ENCODE measurements at regions of chr21 and their contacts with region 1.

Region 1: GRCh38 chr21:35470522-35470921 is 421.4 kb upstream of the RUNX1 start:
- DNase-seq: no peak
- H3K4me3 ChIP-seq: no peak overlapping the region
- H3K27ac ChIP-seq: no peak overlapping the region
- H3K4me1 ChIP-seq: no peaks in the 10 kb centered on the region
- H3K27me3 ChIP-seq: no peaks in the 10 kb centered on the region
- CTCF ChIP-seq: no peak

Region 2: GRCh38 chr21:35206141-35207125 is 264.1 kb before region 1 on chr21:
- CTCF ChIA-PET with region 1: no interaction called
- dilution Hi-C with region 1: no loop called
- in situ Hi-C with region 1: no loop called
- intact Hi-C with region 1: no loop called
- DNase-seq: peak; percentile 65
- H3K4me3 ChIP-seq: peak overlapping the region in 2 of 3 experiments; percentile 1 to 4
- H3K27ac ChIP-seq: peak overlapping the region; percentile 57
- H3K4me1 ChIP-seq: peaks cover 18% of the 10 kb centered on the region
- H3K27me3 ChIP-seq: no peaks in the 10 kb centered on the region
- CTCF ChIP-seq: peak in 1 of 2 donors; percentile 4

Region 3: DNA sequence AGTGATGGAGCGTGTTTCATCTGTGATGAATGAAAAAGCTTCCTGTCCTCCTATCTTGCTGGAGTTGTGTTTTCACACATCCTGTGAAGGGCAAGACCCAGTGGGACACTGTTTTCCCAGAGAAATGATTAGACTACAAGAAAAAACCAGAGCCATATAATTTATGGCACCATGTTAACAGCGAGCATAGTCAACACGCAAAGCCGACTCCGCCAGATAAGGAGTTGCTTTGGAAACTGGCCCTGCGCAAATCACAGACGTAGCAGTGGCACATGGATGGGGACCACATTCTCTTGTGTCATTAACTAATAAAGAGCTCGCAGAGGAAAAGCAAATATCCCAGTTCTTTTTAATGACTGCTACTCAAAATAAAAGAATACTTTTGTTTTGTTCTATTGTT is 49.8 kb after region 1 on chr21:
- CTCF ChIA-PET with region 1: no interaction called
- dilution Hi-C with region 1: loop called (anchors 5 kb)
- in situ Hi-C with region 1: no loop called
- intact Hi-C with region 1: no loop called
- DNase-seq: no peak
- H3K4me3 ChIP-seq: no peak overlapping the region
- H3K27ac ChIP-seq: no peak overlapping the region
- H3K4me1 ChIP-seq: peaks cover 12% of the 10 kb centered on the region
- H3K27me3 ChIP-seq: no peaks in the 10 kb centered on the region
- CTCF ChIP-seq: no peak

Region 4: GRCh38 chr21:35565204-35565611 is 94.7 kb after region 1 on chr21:
- CTCF ChIA-PET with region 1: no interaction called
- dilution Hi-C with region 1: loop called (anchors 5 kb)
- in situ Hi-C with region 1: no loop called
- intact Hi-C with region 1: no loop called
- DNase-seq: peak; percentile 39
- H3K4me3 ChIP-seq: no peak overlapping the region
- H3K27ac ChIP-seq: no peak overlapping the region
- H3K4me1 ChIP-seq: no peaks in the 10 kb centered on the region
- H3K27me3 ChIP-seq: no peaks in the 10 kb centered on the region
- CTCF ChIP-seq: no peak

Region 5: DNA sequence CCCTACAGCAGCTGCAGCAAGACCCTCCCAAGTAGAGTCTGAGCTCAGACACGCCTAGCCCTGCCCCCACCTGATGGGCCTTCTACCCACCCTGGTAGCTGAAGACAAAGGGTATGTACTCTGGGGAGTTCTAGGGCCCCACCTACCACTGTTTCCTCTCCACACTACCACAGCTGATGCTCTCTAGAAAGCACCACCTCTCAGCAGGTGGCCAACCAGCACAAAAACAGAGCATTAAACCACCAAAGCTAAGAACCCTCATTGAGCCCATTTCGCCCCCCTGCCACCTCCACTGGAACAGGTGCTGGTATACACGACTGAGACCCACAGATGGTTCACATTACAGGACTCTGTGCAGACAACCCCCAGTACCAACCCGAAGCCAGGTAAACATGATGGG is 330.9 kb after region 1 on chr21:
- CTCF ChIA-PET with region 1: no interaction called
- dilution Hi-C with region 1: no loop called
- in situ Hi-C with region 1: no loop called
- intact Hi-C with region 1: no loop called
- DNase-seq: no peak
- H3K4me3 ChIP-seq: no peak overlapping the region
- H3K27ac ChIP-seq: no peak overlapping the region
- H3K4me1 ChIP-seq: peaks cover 19% of the 10 kb centered on the region
- H3K27me3 ChIP-seq: no peaks in the 10 kb centered on the region
- CTCF ChIP-seq: no peak